Endothelial cell of umbilical vein (primary cell): ENCODE measurements at regions of chr2 and their contacts with region 1.

Region 1: DNA sequence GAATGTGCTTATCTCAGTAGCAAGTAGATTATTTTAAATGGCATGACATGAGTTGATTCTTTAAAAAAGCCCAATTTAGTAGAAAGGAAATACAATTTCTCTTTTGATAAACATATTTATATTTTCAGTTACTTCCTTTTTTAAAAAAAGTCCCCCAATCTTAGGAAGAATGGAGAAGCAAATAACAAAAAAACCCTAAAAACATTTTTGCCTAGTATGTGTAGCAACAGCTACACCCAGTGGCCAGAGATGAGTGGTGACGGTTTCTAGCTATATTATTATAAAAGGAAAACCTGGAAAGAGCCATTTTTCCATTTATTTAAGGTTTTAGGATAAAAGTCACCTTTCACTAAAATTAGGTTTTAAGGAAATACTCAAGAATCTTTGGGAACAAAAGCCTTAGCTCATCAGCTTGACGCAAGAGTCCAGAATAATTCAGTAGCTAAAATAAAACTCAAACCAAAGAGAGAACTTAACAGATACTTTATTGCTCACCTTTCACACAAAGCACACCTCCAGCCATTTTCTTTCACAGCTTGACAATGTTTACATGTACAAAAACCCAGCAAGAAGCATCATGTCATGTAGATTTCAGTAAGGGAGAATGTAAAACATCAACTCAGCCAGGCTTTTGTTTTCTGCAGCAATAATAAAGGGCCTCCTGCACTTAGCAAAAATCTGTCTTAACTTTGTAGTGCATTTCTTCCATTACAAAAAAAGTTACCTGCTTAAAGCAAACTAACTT is 15.7 kb downstream of the FAM98A start:
- DNase-seq: peak; percentile 64
- H3K4me3 ChIP-seq: no peak overlapping the region
- H3K27ac ChIP-seq: no peak overlapping the region
- H3K4me1 ChIP-seq: peaks cover 3% of the 10 kb centered on the region
- H3K27me3 ChIP-seq: no peaks in the 10 kb centered on the region
- CTCF ChIP-seq: peak; percentile 63 to 66
- POLR2A ChIP-seq: no peak

Region 2: DNA sequence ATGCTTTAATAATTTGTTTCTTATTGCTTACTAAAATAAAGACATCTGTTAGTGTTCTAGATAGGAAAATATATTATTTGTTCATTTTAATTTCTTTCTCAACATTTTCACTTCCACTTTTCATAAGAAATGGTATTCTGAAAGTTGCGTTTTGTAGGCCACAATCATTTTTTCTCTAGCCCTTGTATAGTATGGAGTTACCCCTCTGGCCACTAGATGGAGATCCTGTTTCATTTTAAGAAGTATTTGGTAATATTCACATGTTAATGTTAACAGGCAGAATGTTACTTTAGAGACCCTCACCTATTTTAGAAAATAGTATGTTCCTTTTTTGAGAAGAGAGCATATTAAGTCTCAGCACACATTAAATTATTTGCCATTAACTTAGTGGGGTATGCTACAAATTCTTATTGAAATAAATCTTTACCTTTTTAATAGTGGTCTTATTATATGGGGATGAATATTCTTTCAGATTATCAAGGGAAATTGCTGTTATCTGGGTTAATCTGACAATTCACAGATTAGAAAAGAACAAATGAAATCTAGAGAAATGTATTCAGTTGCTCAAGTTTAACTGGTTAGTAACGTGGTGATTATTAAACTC is 1029.4 kb before region 1 on chr2:
- CTCF ChIA-PET with region 1: no interaction called
- POLR2A ChIA-PET with region 1: no interaction called
- dilution Hi-C with region 1: no loop called
- intact Hi-C with region 1: loop called (anchors 5 kb)
- DNase-seq: peak; percentile 63
- H3K4me3 ChIP-seq: no peak overlapping the region
- H3K27ac ChIP-seq: no peak overlapping the region
- H3K4me1 ChIP-seq: peaks cover 7% of the 10 kb centered on the region
- H3K27me3 ChIP-seq: no peaks in the 10 kb centered on the region
- CTCF ChIP-seq: peak; percentile 50
- POLR2A ChIP-seq: no peak

Region 3: DNA sequence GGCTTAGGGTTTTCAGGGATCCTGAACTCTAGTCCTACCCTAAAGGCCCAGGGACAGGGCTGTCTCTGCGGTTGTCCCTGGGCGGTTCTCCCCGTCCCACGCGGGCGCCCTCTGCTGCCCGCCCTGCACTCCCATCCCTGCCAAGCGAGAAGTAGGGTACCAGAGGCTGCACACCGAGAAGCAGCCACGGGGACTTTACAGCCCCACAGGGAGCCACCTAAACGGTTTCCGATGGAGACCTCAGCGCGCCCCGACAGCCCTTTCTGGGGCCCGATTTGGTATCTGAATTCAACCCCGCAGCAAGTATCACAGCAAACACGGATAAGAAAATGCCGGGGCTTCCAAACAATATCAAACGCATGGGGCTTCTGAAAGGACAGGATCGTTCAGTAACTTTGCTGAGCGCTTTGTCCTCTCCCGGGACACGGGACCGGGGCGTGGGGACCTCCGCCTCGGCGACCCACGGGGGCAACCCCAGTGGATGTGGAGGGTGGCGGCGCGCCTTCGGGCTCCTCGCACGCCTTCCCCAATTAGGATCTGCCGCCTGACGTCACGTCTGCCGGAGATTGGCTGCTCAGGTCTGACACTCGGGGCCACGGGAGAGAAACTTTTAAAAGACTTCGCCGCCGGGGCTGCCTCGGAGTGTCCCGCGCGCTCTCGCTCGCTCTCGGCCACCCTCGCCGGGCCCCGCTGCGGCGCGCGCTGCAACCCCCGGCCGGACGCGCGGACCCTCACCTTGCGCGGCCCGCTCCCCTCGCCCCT is 636.9 kb before region 1 on chr2 and contains the start of gene LTBP1:
- CTCF ChIA-PET with region 1: interaction called, 3 read pairs
- POLR2A ChIA-PET with region 1: no interaction called
- dilution Hi-C with region 1: no loop called
- intact Hi-C with region 1: loop called (anchors 1 kb)
- DNase-seq: peak; percentile 77
- H3K4me3 ChIP-seq: peak within 1 kb of the TSS; percentile 50 to 86 (median 55)
- H3K27ac ChIP-seq: peak within 1 kb of the TSS; percentile 58
- H3K4me1 ChIP-seq: peaks cover 10% of the 10 kb centered on the region
- H3K27me3 ChIP-seq: no peaks in the 10 kb centered on the region
- CTCF ChIP-seq: peak; percentile 88 to 90
- POLR2A ChIP-seq: peak; percentile 14
- total RNA-seq, gene LTBP1: 68.2 and 107 TPM in 2 replicates

Region 4: GRCh38 chr2:33380001-33380609 is 203.3 kb before region 1 on chr2:
- CTCF ChIA-PET with region 1: interaction called, 14 read pairs
- POLR2A ChIA-PET with region 1: no interaction called
- dilution Hi-C with region 1: no loop called
- intact Hi-C with region 1: no loop called
- DNase-seq: no peak
- H3K4me3 ChIP-seq: no peak overlapping the region
- H3K27ac ChIP-seq: no peak overlapping the region
- H3K4me1 ChIP-seq: peaks cover 3% of the 10 kb centered on the region
- H3K27me3 ChIP-seq: no peaks in the 10 kb centered on the region
- CTCF ChIP-seq: peak; percentile 44 to 58
- POLR2A ChIP-seq: no peak

Region 5: DNA sequence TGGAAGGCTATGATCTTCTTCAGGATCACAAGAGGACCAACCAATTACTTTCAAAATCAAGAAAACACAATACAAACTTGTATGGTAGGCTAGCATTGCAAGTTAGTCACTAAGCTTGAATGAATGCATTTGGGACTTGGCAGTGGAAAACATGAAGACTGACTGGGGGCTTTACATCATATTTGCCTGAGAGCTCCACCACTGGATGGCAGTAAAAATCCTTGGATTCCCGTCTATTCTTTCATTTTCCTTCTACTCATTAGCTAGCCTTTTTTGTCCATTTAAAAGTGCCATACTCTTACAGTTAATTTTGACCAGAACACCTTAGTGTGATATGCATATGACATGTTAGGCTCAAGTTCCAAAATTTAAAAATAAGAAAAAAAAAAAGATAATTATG is 170.4 kb before region 1 on chr2:
- CTCF ChIA-PET with region 1: interaction called, 93 read pairs
- POLR2A ChIA-PET with region 1: no interaction called
- dilution Hi-C with region 1: no loop called
- intact Hi-C with region 1: loop called (anchors 1 kb)
- DNase-seq: peak; percentile 82
- H3K4me3 ChIP-seq: no peak overlapping the region
- H3K27ac ChIP-seq: no peak overlapping the region
- H3K4me1 ChIP-seq: peaks cover 11% of the 10 kb centered on the region
- H3K27me3 ChIP-seq: no peaks in the 10 kb centered on the region
- CTCF ChIP-seq: peak; percentile 41 to 57
- POLR2A ChIP-seq: no peak

Region 6: DNA sequence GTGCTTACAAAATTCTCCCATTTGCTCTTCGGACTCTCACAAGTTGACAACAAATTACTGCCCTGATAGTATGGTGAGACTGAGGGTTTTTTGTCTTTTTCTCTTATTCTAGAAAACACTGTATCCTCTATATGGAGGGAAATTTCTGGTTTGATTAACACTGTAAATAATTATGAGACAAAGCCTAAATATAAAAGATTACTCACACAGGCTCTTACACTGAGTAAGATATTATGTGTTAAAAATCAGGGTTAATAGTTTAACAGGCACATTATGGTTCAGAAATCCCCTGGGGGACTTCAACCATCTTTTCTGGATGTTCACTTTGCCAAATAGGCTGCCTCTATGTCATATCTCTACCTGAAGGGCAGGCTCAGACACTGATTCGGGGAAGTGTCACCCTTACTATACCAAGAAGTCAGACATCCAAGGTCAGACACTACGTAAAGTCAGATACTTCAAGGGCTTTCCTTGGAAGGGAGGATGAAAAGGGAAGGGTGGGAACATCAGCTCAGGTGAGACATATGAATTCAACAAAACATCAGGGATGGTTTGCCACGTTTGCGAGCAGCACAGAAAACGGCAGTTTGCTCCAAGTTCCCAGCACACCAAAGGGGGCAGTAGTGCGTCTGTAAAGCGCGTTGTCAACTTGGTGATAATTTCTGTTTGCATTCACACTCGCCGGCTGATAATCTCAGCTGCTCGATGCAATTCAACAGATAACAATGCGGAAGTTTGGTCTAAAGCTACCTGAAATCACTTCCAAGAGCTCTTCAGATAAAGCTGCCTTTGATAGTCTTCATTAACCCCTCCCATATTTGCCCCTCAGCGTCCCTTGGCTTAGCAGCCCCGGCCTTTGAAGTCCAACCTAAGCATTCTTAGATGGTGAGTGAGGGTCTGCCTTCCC is 107.9 kb before region 1 on chr2:
- CTCF ChIA-PET with region 1: interaction called, 35 read pairs
- POLR2A ChIA-PET with region 1: no interaction called
- dilution Hi-C with region 1: no loop called
- intact Hi-C with region 1: loop called (anchors 1 kb)
- DNase-seq: peak; percentile 87
- H3K4me3 ChIP-seq: peak overlapping the region; percentile 35 to 63 (median 42)
- H3K27ac ChIP-seq: peak overlapping the region; percentile 82
- H3K4me1 ChIP-seq: peaks cover 23% of the 10 kb centered on the region
- H3K27me3 ChIP-seq: peaks cover 3 to 5% of the 10 kb centered on the region in 2 experiments
- CTCF ChIP-seq: peak; percentile 85 to 86
- POLR2A ChIP-seq: no peak

Region 7: GRCh38 chr2:33696234-33696633 is 112.9 kb after region 1 on chr2:
- CTCF ChIA-PET with region 1: no interaction called
- POLR2A ChIA-PET with region 1: no interaction called
- dilution Hi-C with region 1: no loop called
- intact Hi-C with region 1: no loop called
- DNase-seq: no peak
- H3K4me3 ChIP-seq: no peak overlapping the region
- H3K27ac ChIP-seq: no peak overlapping the region
- H3K4me1 ChIP-seq: no peaks in the 10 kb centered on the region
- H3K27me3 ChIP-seq: peaks cover 0 to 3% of the 10 kb centered on the region in 2 experiments
- CTCF ChIP-seq: no peak
- POLR2A ChIP-seq: no peak